ENCODE measurements at regions of chr2 and their contacts with region 1.

Region 1: DNA sequence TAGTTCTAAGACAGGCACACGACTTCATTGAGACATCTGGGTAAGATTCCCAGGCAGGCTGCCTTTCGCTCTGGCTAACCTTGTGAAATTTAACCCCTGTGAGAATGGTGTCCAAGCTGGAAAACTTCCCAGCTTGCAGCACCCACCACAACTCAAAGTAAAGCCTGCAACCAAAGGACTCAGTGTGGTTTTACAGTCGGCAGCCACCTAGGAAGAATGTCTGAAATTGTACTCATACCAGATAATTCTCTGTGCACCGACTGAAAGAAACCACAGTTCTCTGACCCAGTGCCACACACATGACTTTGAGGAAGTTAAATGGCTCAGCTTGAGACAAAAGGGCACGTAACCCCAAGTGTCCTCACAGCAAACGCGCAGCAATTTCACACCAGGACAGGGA is 125.7 kb downstream of the RBMS1 start:
- DNase-seq: no peak
- ATAC-seq: peak; percentile 71
- H3K4me3 Mint-ChIP-seq: peak overlapping the region; percentile 6
- H3K27ac Mint-ChIP-seq: no peak overlapping the region
- H3K4me1 Mint-ChIP-seq: peaks cover 40% of the 10 kb centered on the region
- H3K27me3 Mint-ChIP-seq: no peaks in the 10 kb centered on the region
- CTCF ChIP-seq: no peak

Region 2: DNA sequence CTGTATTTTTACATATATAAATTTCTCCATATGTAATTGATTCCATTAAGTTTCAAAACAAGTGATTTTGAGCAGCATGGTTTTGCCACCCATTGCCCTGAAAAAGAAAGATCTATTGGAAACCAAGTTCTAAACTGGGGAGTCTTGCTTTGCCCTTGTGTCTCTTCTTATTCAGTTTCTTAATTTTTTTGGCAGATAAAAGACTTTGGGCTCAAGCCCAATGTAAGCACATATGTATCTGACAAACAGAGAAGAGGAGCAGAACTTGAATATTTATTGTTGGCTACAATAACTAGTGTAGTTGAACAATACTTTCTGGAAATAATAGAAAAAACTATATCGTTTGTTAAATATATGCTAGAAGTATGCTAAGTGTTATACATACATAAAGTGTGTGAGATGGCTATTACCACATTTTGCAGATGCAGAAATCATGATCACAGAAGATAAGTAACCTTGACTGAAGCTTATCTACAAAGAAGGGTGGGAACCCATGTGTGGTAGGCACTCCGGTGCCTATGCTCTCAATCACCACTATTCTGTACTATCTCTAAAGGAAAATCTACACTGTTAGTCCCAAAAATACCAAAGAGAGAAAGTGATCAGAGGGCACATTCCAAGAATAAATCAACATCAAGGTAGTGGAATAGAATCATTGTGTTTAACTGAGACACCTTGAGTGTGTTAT is 414.6 kb before region 1 on chr2:
- CTCF ChIA-PET with region 1: no interaction called
- POLR2A ChIA-PET with region 1: no interaction called
- intact Hi-C with region 1: no loop called
- DNase-seq: no peak
- ATAC-seq: no peak
- H3K4me3 Mint-ChIP-seq: no peak overlapping the region
- H3K27ac Mint-ChIP-seq: no peak overlapping the region
- H3K4me1 Mint-ChIP-seq: no peaks in the 10 kb centered on the region
- H3K27me3 Mint-ChIP-seq: no peaks in the 10 kb centered on the region
- CTCF ChIP-seq: no peak

Region 3: DNA sequence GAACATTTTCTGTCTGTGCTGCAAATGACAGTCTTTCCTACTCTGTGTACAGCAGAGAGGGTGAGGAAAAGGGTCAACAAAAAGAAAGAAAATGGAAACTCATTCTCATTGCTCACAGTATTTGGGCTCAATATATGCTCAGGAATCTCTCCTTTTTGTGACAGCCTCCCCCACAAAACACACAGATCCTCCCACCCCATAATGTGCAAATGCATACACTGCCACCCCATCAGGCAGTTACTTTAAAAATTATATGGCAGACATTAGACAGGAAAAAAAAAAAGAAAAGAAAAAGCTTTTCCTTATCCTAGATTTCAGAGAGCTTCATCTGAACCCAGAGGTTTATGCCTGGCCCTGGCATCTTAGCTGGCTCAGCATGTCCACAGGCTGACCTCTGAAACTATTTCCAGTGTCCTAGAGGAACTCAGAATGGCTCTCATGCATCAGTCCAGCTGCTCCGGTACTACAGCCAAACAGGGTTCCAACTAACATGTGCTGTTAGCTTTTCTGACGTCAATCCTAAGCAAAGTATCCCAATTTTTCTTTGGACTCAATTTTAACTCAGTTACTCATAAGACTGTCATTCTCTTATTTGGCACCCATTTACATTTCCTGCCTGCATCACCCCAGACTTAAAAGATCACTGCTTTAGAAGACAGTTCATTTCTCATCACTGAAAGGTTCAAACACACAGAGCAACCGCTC is 19.8 kb after region 1 on chr2:
- CTCF ChIA-PET with region 1: no interaction called
- POLR2A ChIA-PET with region 1: no interaction called
- intact Hi-C with region 1: loop called (anchors 2 kb)
- DNase-seq: no peak
- ATAC-seq: no peak
- H3K4me3 Mint-ChIP-seq: no peak overlapping the region
- H3K27ac Mint-ChIP-seq: no peak overlapping the region
- H3K4me1 Mint-ChIP-seq: peaks cover 49% of the 10 kb centered on the region
- H3K27me3 Mint-ChIP-seq: no peaks in the 10 kb centered on the region
- CTCF ChIP-seq: no peak

Region 4: DNA sequence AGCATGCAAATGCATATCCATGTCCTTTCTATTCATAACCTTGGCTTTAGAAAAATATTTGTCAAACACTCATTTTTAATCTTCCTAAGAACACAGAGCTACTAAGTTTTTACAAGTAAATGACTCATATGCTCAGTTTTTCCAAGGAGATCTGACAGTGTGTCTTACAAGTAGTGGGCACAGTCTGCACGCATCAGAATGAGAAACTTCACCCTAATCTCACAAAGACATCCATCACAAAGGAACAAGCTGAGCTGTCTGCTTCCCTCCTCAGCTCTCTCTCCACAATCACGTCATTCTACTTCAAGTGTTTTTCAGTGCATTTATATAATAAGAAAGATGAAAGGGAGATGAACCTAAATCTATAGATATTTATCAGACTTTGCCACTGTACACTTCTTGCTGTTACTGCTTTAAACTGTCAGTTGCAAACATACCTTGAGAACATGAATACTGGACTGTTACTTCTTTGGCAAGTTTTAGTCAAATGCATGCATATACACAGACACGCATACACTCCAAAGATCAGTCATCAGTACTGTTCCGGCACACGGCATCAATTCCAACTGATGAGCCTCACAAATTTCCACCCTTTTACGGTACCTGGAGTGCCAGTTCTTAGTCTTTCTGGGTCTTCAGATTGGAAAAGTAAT is 50.0 kb after region 1 on chr2:
- CTCF ChIA-PET with region 1: no interaction called
- POLR2A ChIA-PET with region 1: no interaction called
- intact Hi-C with region 1: no loop called
- DNase-seq: no peak
- ATAC-seq: no peak
- H3K4me3 Mint-ChIP-seq: no peak overlapping the region
- H3K27ac Mint-ChIP-seq: no peak overlapping the region
- H3K4me1 Mint-ChIP-seq: peaks cover 8% of the 10 kb centered on the region
- H3K27me3 Mint-ChIP-seq: peaks cover 4% of the 10 kb centered on the region
- CTCF ChIP-seq: no peak

Measured in activated B cell treated with CpG ODN at 0.5 μM for 24 hours (primary cell).